ENCODE measurements at regions of chr1 and their contacts with region 1.

Region 1: GRCh38 chr1:202716654-202717053 is 6.4 kb upstream of the SYT2 start:
- H3K4me3 Mint-ChIP-seq: no peak overlapping the region
- H3K27ac Mint-ChIP-seq: no peak overlapping the region
- H3K4me1 Mint-ChIP-seq: no peaks in the 10 kb centered on the region
- H3K27me3 Mint-ChIP-seq: peaks cover 86% of the 10 kb centered on the region

Region 2: DNA sequence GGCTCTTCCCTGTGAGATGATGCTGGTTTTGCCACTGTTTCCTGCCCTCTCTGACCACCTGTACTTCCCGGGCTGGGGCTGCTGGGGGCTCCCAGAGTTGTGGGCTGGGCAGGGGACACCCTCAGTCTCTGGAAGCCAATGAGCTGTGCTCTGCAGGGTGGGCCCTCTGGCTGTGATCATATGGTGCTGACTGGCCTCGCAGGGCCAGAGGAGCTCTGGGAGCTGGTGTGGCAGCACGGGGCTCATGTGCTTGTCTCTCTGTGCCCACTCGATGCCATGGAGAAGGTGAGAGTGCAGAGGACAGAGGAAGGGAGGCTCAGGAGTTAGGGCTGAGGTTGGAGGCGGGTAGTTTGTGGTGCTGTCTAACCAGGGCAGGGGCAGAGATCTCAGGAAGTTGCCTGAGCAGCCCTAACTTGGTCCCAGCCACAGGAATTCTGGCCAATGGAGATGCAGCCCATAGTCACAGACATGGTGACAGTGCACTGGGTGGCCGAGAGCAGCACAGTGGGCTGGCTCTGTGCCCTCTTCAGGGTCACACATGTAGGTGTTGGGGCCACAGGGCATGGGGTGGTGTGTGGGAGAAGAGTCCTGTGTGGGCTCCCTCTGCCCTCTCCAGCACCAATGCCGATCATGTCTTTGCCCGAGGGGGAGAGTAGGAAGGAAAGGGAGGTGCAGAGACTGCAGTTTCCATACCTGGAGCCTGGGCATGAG is 528.8 kb before region 1 on chr1:
- intact Hi-C with region 1: loop called (anchors 1 kb)
- H3K4me3 Mint-ChIP-seq: no peak overlapping the region
- H3K27ac Mint-ChIP-seq: no peak overlapping the region
- H3K4me1 Mint-ChIP-seq: peaks cover 5% of the 10 kb centered on the region
- H3K27me3 Mint-ChIP-seq: peaks cover 54% of the 10 kb centered on the region

Region 3: GRCh38 chr1:202274611-202275010 is 442.0 kb before region 1 on chr1:
- intact Hi-C with region 1: loop called (anchors 1 kb)
- H3K4me3 Mint-ChIP-seq: no peak overlapping the region
- H3K27ac Mint-ChIP-seq: no peak overlapping the region
- H3K4me1 Mint-ChIP-seq: no peaks in the 10 kb centered on the region
- H3K27me3 Mint-ChIP-seq: peaks cover 18% of the 10 kb centered on the region

Region 4: GRCh38 chr1:202462342-202463076 is 254.1 kb before region 1 on chr1:
- intact Hi-C with region 1: loop called (anchors 5 kb)
- H3K4me3 Mint-ChIP-seq: no peak overlapping the region
- H3K27ac Mint-ChIP-seq: no peak overlapping the region
- H3K4me1 Mint-ChIP-seq: peaks cover 5% of the 10 kb centered on the region
- H3K27me3 Mint-ChIP-seq: peaks cover 51% of the 10 kb centered on the region

Region 5: DNA sequence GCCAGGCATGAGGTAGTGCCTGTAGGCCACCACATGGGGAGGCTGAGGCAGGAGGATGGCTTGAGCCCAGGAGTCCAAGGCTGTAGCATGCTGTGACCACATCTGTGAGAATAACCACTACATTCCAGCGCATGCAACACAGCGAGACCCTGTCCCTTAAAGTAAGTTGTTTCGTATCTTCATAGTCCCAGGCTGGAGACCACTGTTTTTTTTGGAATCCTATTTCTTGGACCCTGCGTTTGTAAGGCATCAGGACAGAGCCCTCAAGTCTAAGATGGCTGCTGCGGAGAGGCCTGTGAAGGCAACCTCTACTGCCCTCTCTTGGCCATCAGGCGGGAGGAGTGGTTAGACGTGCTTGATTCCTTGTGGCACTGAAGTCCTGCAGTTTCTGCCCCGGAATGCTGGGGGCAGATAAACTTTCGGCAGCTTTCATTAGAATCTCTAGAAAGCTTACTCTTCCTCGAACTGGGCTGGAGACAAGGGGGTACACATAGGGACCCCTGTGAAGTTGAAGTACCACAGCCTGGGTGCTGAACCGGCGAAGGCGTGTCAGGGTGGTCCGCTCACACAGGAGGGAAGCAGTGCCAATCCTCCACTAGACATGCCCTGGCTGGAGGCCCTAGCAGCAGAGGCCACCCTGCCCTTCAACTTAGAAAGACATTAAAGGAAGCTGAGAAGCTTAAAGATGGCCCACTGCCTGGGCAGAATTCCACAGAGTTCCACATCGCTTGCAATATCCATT is 135.7 kb after region 1 on chr1:
- intact Hi-C with region 1: no loop called
- H3K4me3 Mint-ChIP-seq: no peak overlapping the region
- H3K27ac Mint-ChIP-seq: no peak overlapping the region
- H3K4me1 Mint-ChIP-seq: peaks cover 19% of the 10 kb centered on the region
- H3K27me3 Mint-ChIP-seq: no peaks in the 10 kb centered on the region

Region 6: DNA sequence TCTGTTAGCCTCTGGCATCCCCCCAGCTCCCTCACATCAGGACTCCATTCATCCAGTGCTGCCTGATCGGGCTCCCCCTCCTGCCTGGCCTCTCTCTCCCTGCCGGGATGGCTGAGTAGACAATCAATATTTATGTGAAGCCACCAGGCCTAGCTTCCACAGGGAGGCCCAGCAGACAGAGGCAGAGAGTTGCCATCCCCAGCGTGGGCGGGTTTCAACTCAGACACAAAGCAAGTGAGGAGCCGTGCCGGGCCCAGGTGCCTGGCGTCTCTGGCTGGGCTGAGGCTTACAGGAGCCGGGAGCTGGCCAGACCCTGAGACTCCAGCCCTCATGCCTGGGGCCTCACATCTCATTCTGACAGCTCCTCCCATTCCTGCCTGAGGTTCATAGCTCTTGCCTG is 875.5 kb after region 1 on chr1:
- intact Hi-C with region 1: no loop called
- H3K4me3 Mint-ChIP-seq: no peak overlapping the region
- H3K27ac Mint-ChIP-seq: no peak overlapping the region
- H3K4me1 Mint-ChIP-seq: peaks cover 23% of the 10 kb centered on the region
- H3K27me3 Mint-ChIP-seq: peaks cover 5% of the 10 kb centered on the region

Measured in dendritic cell treated with granulocyte-macrophage colony-stimulating factor and Interleukin-4, amounts not matched to agents 40 ng/mL and 50 ng/mL, for 4 days (primary cell).